Right ventricle myocardium superior (tissue), 1 donor: ENCODE measurements at regions of chr2 and their contacts with region 1.

Region 1: DNA sequence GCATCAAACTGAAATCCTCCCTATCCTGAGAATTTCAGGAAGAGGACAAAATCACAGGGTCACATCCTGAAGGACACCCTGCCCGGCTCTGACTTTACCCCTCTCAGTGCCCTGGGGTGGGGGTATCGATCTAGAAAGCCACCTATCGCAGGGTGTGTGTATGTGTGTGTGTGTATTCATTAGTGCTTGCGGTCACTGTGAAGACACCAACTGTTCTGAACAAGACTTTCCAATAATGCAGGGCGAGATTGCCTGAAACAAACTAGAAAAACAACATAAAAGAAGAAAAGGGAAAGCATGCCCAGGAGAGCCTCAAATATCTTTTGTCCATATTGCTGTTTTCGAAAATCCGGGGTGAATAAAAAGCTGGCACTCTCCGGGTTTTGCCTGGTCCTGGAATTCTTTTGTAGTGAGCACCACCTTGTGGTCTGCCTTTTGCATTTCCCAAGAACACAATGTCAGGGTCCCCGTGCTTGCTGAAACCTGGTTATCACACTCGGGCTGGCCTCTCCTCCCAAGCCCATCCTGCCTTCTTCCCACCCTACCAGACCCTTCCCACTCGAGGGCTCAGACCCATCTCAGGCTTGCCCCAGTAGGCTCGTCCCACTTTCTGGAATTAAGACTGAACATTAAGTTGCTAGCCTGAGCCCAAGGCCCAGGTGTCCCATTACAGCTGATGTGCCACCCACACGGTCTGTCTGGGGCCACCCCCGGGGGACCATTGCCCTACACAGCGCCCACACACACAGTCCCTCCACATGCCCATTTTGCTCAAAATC is 25.0 kb upstream of the COPS8 start:
- DNase-seq: no peak
- ATAC-seq: peak; percentile 84

Region 2: DNA sequence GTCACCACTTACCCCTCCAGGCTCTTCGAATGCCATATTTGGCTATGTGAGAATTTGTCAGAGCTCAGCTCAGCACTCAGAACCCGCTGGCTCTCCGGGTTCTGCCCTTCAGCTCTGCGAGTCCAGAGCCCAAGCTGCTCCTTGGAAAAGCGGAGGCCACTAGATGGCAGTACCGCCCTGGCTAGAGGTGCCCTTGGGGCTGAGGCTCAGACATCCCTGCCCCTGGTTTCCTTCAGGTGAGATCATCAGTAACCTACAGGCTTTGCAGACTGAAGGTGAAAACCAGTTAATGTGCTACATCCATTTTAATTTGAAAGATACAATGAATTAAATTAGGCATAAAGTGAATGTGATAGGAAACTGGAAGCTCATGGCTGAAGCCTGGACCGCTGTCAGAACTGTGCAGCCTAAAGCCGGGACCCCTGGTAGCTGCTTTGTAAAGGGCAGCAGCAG is 1281.3 kb before region 1 on chr2:
- intact Hi-C with region 1: loop called (anchors 10 kb)
- DNase-seq: peak; percentile 79
- ATAC-seq: peak; percentile 92

Region 3: DNA sequence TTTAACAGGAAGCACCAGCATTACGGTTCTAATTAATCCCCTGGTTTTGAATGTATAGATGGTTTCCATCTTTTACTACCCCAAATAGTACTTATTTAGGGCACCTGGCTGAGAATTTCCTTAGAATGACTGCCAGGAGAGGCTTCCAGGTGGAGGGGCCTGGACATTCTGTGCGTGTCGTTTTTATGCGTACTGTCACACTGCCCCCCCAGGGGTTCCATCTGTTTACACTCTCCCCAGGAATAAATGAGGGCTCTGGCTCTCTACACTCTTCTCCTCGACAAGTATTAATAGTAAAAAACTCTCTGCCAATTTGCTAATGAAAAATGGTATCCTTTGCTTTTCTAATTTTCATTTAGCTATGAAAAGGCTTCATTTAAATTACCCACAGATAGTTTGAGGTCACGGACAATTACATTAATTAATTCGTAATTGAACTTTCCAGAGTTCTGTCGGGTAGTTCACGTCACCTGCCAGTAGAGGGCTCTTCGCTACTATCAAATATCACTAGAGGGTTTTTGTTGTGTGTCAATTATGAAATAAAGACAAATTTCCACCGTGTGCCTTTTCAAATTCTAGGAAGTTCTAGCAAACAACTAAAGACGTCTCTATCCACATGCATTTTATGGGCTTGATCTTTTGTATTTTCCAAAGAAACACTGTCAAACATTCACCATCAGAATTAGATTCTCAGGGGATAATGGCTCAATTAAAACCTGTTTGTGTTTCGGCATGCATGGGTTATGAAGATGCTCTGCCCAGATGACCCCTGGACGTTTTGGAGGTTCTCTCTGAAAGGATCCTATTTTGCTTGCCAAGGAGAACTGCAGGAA is 707.7 kb before region 1 on chr2:
- intact Hi-C with region 1: loop called (anchors 2 kb)
- DNase-seq: no peak
- ATAC-seq: peak; percentile 53

Region 4: GRCh38 chr2:237122214-237122666 is 61.5 kb after region 1 on chr2:
- intact Hi-C with region 1: no loop called
- DNase-seq: peak; percentile 81
- ATAC-seq: peak; percentile 88

Region 5: DNA sequence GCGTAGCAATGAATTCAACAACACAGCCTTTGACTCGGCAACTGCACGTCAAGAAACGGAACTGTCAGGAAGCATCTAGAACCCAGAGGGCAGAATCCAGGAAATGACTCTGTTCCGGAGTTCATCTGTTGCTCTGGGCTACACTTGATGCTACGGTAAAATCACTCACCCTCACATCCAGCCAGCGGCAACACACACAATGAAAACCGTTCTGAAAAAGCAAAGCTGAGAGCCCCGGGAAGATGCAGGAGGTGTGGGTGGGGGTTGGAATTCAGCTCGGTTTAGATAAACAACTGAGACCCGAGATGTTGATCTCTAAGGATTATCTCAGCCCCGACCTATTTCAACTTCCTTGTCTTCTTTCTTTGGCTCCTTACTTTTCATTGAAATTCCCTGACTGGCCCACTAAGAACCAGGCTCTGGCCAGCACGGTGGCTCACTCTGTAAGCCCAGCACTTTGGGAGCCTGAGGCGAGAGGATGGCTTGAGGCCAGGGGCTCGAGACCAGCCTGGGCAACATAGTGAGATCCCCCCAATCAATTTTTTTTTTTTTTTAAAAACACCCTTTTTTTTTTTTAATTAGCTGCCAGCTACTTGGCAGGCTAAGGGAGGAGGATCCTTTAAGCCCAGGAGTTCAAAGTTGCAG is 543.1 kb after region 1 on chr2:
- intact Hi-C with region 1: no loop called
- DNase-seq: no peak
- ATAC-seq: no peak